T-cell (primary cell): ENCODE measurements at regions of chr13 and their contacts with region 1.

Region 1: DNA sequence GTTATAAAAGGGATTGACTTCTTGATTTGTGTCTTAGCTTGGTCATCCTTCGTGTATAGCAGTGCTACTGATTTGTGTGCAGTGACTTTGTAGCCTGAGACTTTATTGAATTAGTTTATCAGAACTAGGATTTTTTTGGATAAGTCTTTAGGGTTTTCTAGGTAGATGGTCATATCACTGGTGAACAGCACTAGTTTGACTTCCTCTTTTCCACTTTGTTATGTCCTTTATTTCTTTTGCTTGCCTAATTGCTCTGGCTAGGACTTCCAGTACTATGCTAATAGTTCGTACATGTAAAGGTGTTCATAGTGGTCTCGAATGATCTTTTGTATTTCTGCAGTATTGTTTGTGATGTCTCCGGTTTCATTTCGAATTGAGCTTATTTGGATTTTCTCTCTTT is 145.4 kb downstream of the DNAJC3 start:
- DNase-seq: no peak
- ATAC-seq: no peak
- H3K4me3 ChIP-seq: no peak overlapping the region
- H3K4me3 Mint-ChIP-seq: no peak overlapping the region
- H3K27ac ChIP-seq: no peak overlapping the region
- H3K27ac Mint-ChIP-seq: no peak overlapping the region
- H3K4me1 ChIP-seq: no peaks in the 10 kb centered on the region
- H3K4me1 Mint-ChIP-seq: no peaks in the 10 kb centered on the region
- H3K27me3 ChIP-seq: peaks cover 0 to 5% of the 10 kb centered on the region in 2 experiments
- H3K27me3 Mint-ChIP-seq: peaks cover 19 to 27% of the 10 kb centered on the region in 2 donors

Region 2: DNA sequence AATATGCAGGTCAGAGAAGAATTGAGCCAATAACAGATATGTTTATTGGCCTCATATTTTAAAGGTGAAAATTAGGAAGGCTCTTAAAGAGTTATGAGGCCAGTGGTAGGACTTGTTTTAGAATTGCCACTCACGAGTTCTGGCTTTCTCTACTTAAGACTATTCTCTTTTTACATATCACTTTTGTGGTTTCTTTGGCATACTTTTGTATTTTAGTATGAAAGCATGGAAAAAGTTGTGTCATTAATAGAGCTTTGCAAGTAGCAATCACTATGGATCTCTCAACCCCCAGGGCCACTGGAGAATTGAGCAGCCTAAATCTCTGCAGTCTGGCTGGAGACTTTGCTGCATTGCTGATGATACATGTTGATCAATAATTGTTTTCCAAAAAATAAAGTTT is 1045.3 kb before region 1 on chr13:
- CTCF ChIA-PET with region 1: no interaction called
- POLR2A ChIA-PET with region 1: interaction called in 1 of 2 experiments, 11 read pairs
- DNase-seq: no peak
- ATAC-seq: no peak
- H3K4me3 ChIP-seq: no peak overlapping the region
- H3K4me3 Mint-ChIP-seq: no peak overlapping the region
- H3K27ac ChIP-seq: no peak overlapping the region
- H3K27ac Mint-ChIP-seq: no peak overlapping the region
- H3K4me1 ChIP-seq: no peaks in the 10 kb centered on the region
- H3K4me1 Mint-ChIP-seq: no peaks in the 10 kb centered on the region
- H3K27me3 ChIP-seq: peaks cover 0 to 2% of the 10 kb centered on the region in 2 experiments
- H3K27me3 Mint-ChIP-seq: peaks cover 3 to 4% of the 10 kb centered on the region in 2 donors

Region 3: GRCh38 chr13:95349267-95349666 is 473.0 kb before region 1 on chr13:
- CTCF ChIA-PET with region 1: no interaction called
- POLR2A ChIA-PET with region 1: no interaction called
- DNase-seq: no peak
- ATAC-seq: no peak
- H3K4me3 ChIP-seq: no peak overlapping the region
- H3K4me3 Mint-ChIP-seq: no peak overlapping the region
- H3K27ac ChIP-seq: no peak overlapping the region
- H3K27ac Mint-ChIP-seq: no peak overlapping the region
- H3K4me1 ChIP-seq: no peaks in the 10 kb centered on the region
- H3K4me1 Mint-ChIP-seq: no peaks in the 10 kb centered on the region
- H3K27me3 ChIP-seq: peaks cover 0 to 9% of the 10 kb centered on the region in 2 experiments
- H3K27me3 Mint-ChIP-seq: peaks cover 4 to 5% of the 10 kb centered on the region in 2 donors